Activated CD8-positive, alpha-beta T cell treated with anti-CD3 and anti-CD28 coated beads for 36 hours (primary cell): ENCODE measurements at regions of chr9 and their contacts with region 1.

Region 1: DNA sequence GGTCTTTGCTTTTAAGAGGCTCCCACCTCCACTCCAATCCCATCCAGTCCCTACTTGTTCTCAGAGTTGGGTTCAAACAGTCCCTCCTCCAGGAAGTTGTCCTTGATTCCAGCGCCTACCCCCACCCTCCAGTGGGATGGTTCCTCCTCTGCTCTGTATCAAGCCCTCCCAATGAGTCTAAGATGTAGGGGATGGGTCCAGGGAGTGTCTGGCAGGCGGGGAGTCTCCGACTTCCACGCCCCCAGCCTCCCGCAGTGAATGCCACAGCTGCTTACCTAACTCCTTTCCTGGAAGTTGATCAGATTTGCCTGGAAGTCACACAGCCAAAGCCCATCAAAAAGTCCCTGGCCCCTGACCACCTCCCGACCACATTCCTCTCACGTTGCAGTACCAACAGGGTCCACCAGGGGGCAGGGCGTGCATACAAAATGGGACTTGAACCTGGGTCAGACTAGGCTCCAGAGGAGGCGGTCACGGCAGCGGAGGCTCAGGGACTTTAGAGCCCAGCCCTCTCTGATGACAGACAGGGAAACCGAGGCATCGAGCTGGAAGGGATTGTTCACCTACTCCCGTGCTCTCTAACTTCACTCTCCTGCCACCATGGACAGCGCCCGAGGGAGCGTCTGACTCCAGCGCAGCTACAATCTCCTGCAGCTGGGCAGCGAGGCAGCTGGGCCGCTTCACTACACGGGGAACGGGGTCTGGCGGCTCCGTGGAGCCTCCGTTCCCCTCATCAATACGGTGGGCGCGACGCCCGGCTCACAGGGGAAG is 25.0 kb upstream of the TDRD7 start:
- DNase-seq: peak; percentile 87
- ATAC-seq: peak; percentile 68
- H3K4me3 Mint-ChIP-seq: no peak overlapping the region
- H3K27ac Mint-ChIP-seq: no peak overlapping the region
- H3K4me1 Mint-ChIP-seq: peaks cover 12% of the 10 kb centered on the region
- H3K27me3 Mint-ChIP-seq: peaks cover 7% of the 10 kb centered on the region
- CTCF ChIP-seq: peak; percentile 98

Region 2: GRCh38 chr9:97354637-97355036 is 32.3 kb before region 1 on chr9:
- CTCF ChIA-PET with region 1: no interaction called
- POLR2A ChIA-PET with region 1: no interaction called
- intact Hi-C with region 1: no loop called
- DNase-seq: no peak
- ATAC-seq: no peak
- H3K4me3 Mint-ChIP-seq: no peak overlapping the region
- H3K27ac Mint-ChIP-seq: no peak overlapping the region
- H3K4me1 Mint-ChIP-seq: peaks cover 5% of the 10 kb centered on the region
- H3K27me3 Mint-ChIP-seq: no peaks in the 10 kb centered on the region
- CTCF ChIP-seq: no peak

Region 3: GRCh38 chr9:97373331-97373730 is 13.6 kb before region 1 on chr9:
- CTCF ChIA-PET with region 1: interaction called, 23 read pairs
- POLR2A ChIA-PET with region 1: no interaction called
- intact Hi-C with region 1: no loop called
- DNase-seq: no peak
- ATAC-seq: no peak
- H3K4me3 Mint-ChIP-seq: no peak overlapping the region
- H3K27ac Mint-ChIP-seq: no peak overlapping the region
- H3K4me1 Mint-ChIP-seq: peaks cover 2% of the 10 kb centered on the region
- H3K27me3 Mint-ChIP-seq: no peaks in the 10 kb centered on the region
- CTCF ChIP-seq: no peak

Region 4: DNA sequence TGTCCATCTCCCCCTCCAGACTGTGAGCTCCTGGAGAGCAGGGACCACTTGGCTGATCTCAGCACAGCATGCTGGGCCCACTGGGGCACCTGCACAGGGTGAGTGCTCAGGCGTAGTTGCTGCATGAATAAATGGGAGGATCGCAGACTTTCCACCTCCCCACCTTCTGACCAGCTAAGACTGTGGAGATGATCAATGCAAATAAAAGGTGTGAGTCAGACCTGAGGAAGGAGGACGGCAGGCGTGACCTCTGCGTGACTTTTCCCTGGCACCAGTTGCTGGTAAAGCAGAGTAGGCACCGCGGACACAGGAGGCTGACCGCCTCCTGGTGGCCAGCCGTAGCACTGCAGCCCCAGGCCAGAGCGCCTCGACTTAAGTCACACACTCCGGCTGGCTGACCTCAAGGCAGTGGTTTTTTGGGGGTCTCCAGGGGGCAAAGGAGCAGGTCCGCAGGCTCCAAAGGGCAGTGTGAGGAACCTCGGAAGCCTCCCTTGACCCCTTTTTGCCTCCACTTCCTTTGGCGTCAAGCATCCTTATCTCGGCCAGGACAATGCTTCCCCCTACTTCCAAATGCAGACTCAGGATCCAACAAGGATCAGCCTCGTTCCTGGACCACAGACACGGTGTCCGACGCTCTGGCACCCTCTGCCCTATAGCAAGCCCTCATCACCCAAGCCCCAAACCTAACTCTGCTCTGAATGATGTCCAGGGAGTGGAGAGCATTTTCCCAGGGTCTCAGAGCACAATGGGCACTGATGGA is 12.3 kb after region 1 on chr9:
- CTCF ChIA-PET with region 1: interaction called, 35 read pairs
- POLR2A ChIA-PET with region 1: interaction called, 4 read pairs
- intact Hi-C with region 1: no loop called
- DNase-seq: peak; percentile 80
- ATAC-seq: peak; percentile 80
- H3K4me3 Mint-ChIP-seq: no peak overlapping the region
- H3K27ac Mint-ChIP-seq: no peak overlapping the region
- H3K4me1 Mint-ChIP-seq: peaks cover 16% of the 10 kb centered on the region
- H3K27me3 Mint-ChIP-seq: peaks cover 4% of the 10 kb centered on the region
- CTCF ChIP-seq: peak; percentile 98

Region 5: DNA sequence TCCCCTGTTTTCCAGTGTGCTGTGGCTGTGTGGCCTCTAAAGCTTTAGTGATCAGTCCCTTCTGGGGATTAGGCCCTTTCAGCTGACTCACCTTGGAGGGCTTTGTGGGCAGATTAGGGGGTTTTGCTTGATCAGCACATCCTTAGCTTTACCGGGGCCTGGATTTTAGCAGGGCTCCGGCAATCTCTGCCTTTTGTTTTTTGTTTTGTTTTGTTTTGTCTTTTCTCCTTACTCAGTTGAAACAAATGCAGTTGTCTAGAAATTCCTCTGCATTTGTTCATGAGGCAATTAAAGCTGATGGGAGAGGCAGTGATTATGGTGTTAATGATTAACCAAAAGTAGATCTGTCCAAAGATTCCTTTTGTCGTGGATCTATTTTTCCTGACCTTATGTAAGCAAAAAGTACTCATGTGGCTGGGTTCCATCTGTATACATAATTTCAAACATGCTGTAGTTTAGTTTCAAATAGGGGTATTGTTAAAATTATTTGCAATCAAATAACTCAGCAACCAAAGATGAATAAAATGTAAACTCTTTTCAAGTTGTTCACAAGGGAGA is 19.8 kb after region 1 on chr9:
- CTCF ChIA-PET with region 1: interaction called, 35 read pairs
- POLR2A ChIA-PET with region 1: no interaction called
- intact Hi-C with region 1: no loop called
- DNase-seq: no peak
- ATAC-seq: no peak
- H3K4me3 Mint-ChIP-seq: no peak overlapping the region
- H3K27ac Mint-ChIP-seq: no peak overlapping the region
- H3K4me1 Mint-ChIP-seq: peaks cover 5% of the 10 kb centered on the region
- H3K27me3 Mint-ChIP-seq: peaks cover 28% of the 10 kb centered on the region
- CTCF ChIP-seq: no peak

Region 6: DNA sequence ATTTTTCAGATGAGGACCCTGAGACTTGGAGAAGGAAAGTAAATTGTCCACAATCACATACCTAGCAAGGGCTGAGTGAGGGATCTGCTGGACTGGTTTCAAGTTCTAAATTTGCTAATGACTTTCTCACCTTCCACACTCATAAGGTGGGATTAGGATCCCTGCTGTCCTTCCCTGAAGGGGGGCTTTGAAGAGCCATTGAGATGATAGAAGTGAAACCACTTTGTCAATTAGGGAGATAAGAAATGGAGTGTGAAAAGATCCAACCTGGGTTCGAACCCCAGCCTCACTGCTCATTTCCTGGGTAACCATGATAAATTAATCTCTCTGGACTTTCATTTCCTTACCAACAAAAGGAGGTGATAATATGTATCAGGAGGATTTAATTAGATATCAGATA is 433.5 kb after region 1 on chr9:
- CTCF ChIA-PET with region 1: no interaction called
- POLR2A ChIA-PET with region 1: no interaction called
- intact Hi-C with region 1: no loop called
- DNase-seq: no peak
- ATAC-seq: no peak
- H3K4me3 Mint-ChIP-seq: no peak overlapping the region
- H3K27ac Mint-ChIP-seq: no peak overlapping the region
- H3K4me1 Mint-ChIP-seq: no peaks in the 10 kb centered on the region
- H3K27me3 Mint-ChIP-seq: peaks cover 40% of the 10 kb centered on the region
- CTCF ChIP-seq: no peak